GM12878 (cell line): ENCODE measurements at regions of chr20 and their contacts with region 1.

Region 1: DNA sequence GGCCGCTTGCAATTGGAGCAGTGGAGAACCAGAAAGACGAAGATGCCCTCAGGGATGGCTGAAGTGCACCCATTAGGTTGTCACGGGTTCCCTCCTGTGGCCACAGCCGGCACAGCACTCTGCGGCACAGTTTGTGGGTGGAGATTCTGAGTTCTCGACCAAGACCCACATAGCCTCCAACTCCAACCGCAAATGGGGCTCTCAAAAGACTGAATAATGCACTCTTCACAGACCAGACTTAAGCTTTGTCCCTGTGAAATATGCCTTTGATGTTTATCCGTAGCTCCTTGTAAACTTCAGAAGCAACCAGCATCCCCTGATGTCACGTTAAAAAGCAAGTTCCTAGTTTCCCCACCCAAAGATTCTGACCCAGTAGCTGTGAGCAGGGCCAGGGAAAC is 934 bp upstream of the CST9 start:
- DNase-seq: no peak
- ATAC-seq: peak; percentile 99
- H3K4me3 ChIP-seq: no peak overlapping the region
- H3K27ac ChIP-seq: no peak overlapping the region
- H3K4me1 ChIP-seq: no peaks in the 10 kb centered on the region
- H3K27me3 ChIP-seq: no peaks in the 10 kb centered on the region
- CTCF ChIP-seq: peak; percentile 91 to 96 (median 91)
- EP300 ChIP-seq: no peak
- POLR2A ChIP-seq: no peak
- RAD21 ChIP-seq: peak; percentile 87

Region 2: GRCh38 chr20:23357767-23358591 is 248.7 kb before region 1 on chr20:
- CTCF ChIA-PET with region 1: no interaction called
- POLR2A ChIA-PET with region 1: no interaction called
- RAD21 ChIA-PET with region 1: no interaction called
- SMC1A ChIA-PET with region 1: no interaction called
- in situ Hi-C with region 1: no loop called
- intact Hi-C with region 1: no loop called
- DNase-seq: peak; percentile 96
- ATAC-seq: peak; percentile 88
- H3K4me3 ChIP-seq: peak overlapping the region; percentile 78
- H3K27ac ChIP-seq: peak overlapping the region; percentile 85
- H3K4me1 ChIP-seq: peaks cover 7% of the 10 kb centered on the region
- H3K27me3 ChIP-seq: no peaks in the 10 kb centered on the region
- CTCF ChIP-seq: no peak; a peak in 2 of 6 replicates
- EP300 ChIP-seq: peak in 1 of 2 experiments; percentile 48; a peak in 1 of 4 replicates
- POLR2A ChIP-seq: peak; percentile 82
- RAD21 ChIP-seq: no peak

Region 3: DNA sequence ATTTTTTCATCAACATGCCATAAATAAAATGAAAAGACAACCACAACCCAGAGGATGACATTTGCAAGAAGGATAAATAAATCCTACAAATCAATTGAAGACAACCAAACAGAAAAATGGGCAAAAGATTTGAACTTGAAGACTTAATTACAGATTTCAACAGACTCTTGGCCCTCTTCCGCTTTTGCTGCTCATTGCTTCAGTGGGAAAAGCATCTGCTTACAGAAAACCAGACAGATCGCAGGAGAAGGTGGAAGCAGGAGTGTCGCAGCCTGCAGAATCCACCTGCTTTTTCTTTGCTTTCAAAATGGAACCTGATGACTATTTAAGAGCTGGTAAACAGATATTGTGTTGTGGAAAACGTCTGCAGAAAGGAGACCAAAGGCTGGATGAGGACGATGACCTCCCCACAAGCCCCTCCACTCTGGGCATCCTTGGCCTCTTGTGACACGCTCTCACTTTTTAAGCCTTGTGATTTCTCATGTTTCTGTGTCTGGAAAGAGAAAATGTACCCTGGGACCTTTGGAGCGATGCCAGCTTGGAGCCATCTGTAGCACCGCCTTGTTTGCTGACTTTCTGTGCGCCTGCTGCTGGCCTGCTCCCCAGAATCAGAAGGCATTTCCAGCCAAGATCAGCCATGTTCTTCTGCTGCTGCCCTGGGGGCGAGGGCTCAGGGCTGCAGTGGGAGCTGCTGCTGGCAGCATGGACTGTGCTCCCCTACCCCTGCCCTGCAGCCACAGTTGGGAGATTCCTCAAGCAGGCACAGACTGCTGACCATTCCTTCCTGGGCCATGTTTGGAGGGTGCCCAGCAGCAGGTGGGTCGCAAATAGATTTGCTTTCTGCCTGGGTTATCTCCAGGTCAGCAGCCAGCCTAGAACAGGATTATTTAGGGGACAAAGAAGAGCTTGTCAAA is 170.8 kb before region 1 on chr20:
- CTCF ChIA-PET with region 1: interaction called, 17 read pairs
- POLR2A ChIA-PET with region 1: no interaction called
- RAD21 ChIA-PET with region 1: no interaction called
- SMC1A ChIA-PET with region 1: no interaction called
- in situ Hi-C with region 1: loop called (anchors 5 kb)
- intact Hi-C with region 1: loop called (anchors 1 kb)
- DNase-seq: no peak
- ATAC-seq: no peak
- H3K4me3 ChIP-seq: no peak overlapping the region
- H3K27ac ChIP-seq: no peak overlapping the region
- H3K4me1 ChIP-seq: no peaks in the 10 kb centered on the region
- H3K27me3 ChIP-seq: no peaks in the 10 kb centered on the region; a peak in 1 of 4 replicates
- CTCF ChIP-seq: no peak
- EP300 ChIP-seq: no peak
- POLR2A ChIP-seq: no peak
- RAD21 ChIP-seq: no peak

Region 4: DNA sequence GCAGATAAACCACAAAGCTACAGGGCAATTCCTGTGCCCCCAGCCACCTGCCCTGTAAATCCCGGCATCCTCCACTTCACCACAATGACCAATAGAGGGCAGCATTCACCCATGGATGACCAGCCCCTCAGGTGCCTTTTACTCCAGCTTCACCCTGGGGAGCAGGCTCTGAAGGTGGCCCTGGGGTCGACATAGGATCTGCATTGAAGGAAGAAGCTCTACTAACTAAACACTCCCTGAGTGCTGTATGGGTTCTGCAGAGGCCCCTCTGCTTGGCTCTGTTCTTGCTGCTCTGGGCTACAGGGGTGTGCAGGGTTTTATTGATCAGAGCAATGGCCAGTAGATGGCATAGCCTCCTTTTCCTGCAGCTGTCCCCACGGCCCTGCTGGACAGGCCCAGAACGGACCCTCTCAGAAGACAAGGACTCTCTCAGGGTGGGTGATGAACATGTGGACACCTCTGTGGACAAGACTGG is 61.9 kb after region 1 on chr20:
- CTCF ChIA-PET with region 1: no interaction called
- POLR2A ChIA-PET with region 1: no interaction called
- RAD21 ChIA-PET with region 1: no interaction called
- SMC1A ChIA-PET with region 1: no interaction called
- in situ Hi-C with region 1: no loop called
- intact Hi-C with region 1: no loop called
- DNase-seq: no peak
- ATAC-seq: peak; percentile 96
- H3K4me3 ChIP-seq: no peak overlapping the region
- H3K27ac ChIP-seq: no peak overlapping the region
- H3K4me1 ChIP-seq: no peaks in the 10 kb centered on the region
- H3K27me3 ChIP-seq: no peaks in the 10 kb centered on the region
- CTCF ChIP-seq: peak; percentile 73 to 83 (median 79)
- EP300 ChIP-seq: no peak
- POLR2A ChIP-seq: no peak
- RAD21 ChIP-seq: peak; percentile 81

Region 5: DNA sequence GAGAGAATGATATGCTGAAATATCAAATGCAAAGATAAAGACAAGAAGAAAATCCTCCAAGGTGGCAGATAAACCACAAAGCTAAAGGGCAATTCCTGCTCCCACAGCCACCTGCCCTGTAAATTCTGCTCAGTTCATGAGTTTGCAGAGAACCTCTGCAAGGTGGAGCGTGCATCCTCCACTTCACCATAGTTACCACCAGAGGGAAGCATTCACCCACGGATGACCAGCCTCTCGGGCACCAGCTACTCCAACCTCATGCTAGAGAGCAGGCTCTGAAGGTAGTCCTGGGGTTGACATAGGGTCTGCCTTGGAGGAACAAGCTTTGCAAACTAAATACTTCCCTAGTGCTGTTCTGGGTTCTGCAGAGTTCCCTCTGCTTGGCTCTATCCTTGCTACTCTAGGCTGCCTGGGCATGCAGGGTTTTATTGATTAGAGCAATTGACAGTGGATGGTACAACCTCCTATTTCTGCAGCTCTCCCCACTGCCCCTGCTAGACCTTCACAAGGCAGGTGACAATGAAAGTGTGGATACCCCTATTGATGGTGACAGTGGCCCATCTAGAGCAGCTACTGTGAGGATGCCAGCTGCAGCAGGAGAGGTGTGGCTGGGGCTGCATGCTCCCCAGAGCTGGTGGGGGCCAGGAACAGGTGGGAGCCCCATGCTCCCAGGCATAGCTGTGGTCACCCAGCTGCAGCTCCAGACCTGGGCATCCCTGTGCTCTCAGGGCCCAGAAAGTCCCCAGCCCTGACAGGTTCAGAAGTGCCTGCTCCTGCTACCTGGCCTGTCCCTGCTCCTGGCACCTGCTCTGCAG is 330.9 kb after region 1 on chr20:
- CTCF ChIA-PET with region 1: no interaction called
- POLR2A ChIA-PET with region 1: no interaction called
- RAD21 ChIA-PET with region 1: no interaction called
- SMC1A ChIA-PET with region 1: no interaction called
- in situ Hi-C with region 1: no loop called
- intact Hi-C with region 1: no loop called
- DNase-seq: peak; percentile 3
- ATAC-seq: peak; percentile 89
- H3K4me3 ChIP-seq: no peak overlapping the region
- H3K27ac ChIP-seq: no peak overlapping the region
- H3K4me1 ChIP-seq: no peaks in the 10 kb centered on the region
- H3K27me3 ChIP-seq: no peaks in the 10 kb centered on the region
- CTCF ChIP-seq: peak; percentile 62 to 83 (median 69); a peak in 5 of 6 replicates
- EP300 ChIP-seq: no peak
- POLR2A ChIP-seq: no peak
- RAD21 ChIP-seq: peak; percentile 79